KBM-7 (cell line): ENCODE measurements at regions of chr12 and their contacts with region 1.

Region 1: DNA sequence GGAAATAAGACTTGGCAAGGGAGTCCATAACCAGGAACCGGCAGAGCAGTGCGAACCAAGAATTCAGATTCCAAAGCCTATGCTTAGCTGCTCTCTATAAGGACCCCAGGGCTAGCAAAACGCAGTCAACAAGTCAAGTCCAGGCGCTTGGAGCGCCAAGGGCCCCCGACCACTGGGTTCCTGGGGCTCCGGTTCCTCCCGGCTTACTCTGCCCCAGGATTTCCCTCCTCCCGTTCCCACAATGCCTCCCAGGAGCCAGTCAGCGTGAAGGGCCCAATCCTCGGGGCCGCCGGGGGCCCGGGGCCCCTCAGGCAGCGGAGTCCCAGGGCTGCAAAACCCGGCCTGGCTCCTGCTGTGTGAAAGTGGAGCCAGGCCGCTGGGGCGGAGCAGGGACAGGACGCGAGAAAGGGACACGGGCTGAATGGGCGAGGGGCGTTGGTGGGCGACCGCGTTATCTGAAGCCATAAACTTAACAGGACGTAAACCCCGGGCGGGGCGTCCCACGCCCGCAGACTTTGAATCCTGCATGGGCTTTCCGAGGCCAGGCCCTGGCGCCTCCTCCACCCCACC is 1.5 kb downstream of the KRT8 start:
- DNase-seq: peak; percentile 94

Region 2: GRCh38 chr12:52949413-52950331 is 46.3 kb after region 1 on chr12:
- in situ Hi-C with region 1: loop called (anchors 10 kb)
- DNase-seq: peak; percentile 90